ENCODE measurements at regions of chr21 and their contacts with region 1.

Region 1: DNA sequence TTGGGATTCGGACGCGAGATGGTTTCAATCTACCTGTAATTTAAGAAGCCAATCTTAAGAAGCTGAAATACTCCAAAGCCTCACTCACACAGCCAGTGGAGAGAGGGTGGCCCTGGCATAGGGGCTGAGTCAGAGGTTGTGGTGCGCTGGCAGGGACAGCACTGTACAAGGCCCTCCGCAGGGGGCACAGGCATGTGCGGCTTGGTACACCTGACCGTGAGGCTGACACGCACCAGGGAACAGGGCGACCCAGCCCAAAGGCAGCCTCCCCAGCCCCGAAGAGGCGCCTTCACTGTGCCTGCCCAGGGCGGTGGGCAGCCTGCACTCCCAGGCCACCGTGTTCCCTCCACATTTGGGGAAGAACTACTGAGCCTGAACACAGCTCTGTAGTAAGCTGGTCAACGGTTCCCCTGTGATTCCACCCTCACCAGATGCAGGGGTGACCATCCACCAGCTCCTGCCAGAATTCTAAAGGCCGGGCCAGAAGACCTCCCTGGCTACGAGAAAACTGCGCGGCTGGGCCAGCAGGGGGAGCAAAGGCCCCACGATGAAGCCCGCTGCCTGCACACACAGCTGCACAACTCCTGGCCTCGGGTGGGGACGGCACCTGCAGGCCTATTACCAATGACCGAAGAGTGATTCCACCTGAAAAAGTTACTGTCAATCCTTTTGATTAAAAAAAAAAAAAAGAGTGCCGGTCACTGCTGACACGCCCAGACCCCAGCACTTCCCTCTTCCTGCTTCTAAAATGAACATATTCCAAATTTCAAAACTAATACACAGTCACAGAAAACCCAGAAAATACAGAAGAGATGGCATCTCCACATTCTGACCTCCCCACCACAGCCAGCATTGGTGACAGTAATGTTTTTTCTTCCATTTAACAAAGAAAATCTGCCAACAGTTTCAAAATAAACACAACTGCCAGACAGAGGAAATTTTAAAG is 49.6 kb upstream of the RIPK4 start:
- DNase-seq: peak; percentile 64
- H3K4me3 ChIP-seq: no peak overlapping the region
- H3K27ac ChIP-seq: no peak overlapping the region
- H3K4me1 ChIP-seq: no peaks in the 10 kb centered on the region
- H3K27me3 ChIP-seq: no peaks in the 10 kb centered on the region
- CTCF ChIP-seq: peak; percentile 74

Region 2: DNA sequence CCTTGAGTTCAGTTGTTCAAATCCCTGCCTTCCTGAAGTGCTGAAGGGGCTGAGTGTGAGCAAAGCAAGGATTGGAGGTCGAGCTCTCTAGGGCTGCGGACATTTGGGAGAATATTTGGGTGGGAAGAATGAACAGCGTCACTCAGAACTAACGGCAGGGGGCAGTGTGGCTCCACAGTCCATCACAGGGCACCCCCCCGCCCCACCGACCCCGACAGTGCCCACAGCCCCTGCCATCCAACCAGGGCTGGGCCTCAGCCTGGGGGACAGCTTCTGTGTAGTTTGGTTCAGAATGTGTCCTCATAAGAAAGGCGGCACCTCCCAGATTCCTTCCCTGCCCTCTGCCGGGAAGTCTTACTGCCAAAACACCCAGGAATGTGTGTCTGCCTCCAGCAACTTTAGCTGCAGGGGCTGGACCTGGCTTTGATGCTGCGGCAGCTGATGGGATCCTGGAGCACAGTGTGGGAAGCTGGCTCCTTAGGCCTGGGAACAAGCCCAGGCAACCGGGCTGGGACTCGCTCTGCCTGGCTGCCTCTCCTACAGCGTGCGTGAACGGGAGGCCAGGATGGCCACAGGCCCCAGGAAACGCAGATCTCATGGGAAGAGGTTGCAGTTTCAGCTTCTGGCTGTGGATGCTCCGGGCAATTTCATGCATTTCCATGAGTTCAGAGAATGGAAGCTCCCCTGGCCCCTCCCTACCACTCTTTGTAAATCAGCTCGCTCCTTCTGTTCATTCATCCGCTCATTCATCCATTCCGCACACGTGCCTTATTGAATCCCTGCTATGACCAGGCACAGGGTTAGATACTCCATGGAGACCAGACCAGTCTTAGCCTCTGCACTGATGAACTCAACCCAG is 203.6 kb before region 1 on chr21:
- intact Hi-C with region 1: loop called (anchors 5 kb)
- DNase-seq: peak; percentile 65
- H3K4me3 ChIP-seq: no peak overlapping the region
- H3K27ac ChIP-seq: no peak overlapping the region
- H3K4me1 ChIP-seq: peaks cover 12% of the 10 kb centered on the region
- H3K27me3 ChIP-seq: no peaks in the 10 kb centered on the region
- CTCF ChIP-seq: peak; percentile 66

Region 3: DNA sequence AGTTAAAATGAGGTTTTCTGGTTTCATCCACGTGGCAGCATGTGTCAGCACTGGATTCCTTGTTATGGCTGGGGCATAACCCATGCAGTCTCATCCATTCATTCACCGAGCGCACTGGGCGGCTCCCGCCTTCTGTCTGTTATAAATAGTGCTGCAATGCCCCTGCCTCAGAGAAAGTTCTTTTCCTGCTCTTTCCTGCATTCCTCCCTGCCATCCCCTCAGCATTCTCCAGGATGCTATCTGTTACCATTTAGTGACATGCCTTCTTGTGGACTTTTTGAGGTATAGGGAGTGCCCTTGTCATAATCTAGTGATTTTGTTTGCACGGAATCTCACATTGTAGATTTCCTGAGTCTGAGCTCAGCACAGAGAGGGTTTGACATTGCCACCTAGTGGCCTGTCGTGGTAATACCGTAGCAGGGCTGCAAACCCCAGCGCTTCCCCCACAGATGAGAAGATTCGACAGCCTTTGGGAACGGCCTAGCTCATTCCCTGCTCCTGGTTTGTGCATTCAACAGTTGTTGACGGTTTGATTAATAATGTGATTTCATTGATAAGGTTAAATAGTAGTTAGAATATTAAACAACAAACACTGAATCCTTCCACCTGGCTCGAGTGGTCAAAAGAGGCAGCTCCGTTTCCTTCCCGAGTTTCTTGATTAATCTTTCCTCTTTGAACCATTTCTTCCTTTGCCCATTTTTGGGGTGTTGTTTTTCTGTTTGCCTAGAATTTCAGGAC is 300.9 kb after region 1 on chr21:
- intact Hi-C with region 1: loop called (anchors 2 kb)
- DNase-seq: peak; percentile 83
- H3K4me3 ChIP-seq: no peak overlapping the region
- H3K27ac ChIP-seq: no peak overlapping the region
- H3K4me1 ChIP-seq: no peaks in the 10 kb centered on the region
- H3K27me3 ChIP-seq: no peaks in the 10 kb centered on the region
- CTCF ChIP-seq: peak; percentile 92